GM12878 (cell line): ENCODE measurements at regions of chr4 and their contacts with region 1.

Region 1: DNA sequence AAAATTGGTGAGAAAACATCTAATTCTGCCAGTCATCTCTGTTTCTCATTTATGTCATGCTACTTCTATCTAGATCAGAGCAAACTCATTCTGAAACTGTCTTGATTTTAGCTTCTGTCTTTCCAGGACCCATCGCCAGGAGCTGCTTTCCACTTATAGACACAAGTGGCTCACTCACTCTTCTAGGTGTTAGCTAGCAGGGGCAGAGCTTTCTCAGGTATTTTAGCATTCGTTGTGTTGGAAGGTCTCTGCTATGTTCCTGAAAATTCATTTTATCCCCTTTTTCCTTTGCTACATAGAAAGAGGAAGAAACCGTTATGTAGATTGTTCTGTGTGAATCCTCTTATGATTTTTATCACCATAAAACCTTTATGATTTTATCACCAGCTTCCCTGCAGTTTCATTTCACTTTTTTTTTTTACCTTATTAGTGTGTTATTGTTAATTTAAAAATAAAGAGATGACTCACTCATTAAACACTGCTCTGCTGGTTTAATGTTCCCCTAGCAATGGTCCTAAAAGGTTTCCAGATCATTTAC is 246.6 kb upstream of the AADAT start:
- DNase-seq: peak; percentile 64
- ATAC-seq: peak; percentile 93
- H3K4me3 ChIP-seq: no peak overlapping the region
- H3K27ac ChIP-seq: peak overlapping the region; percentile 34; the same call in 1 of the 2 replicates
- H3K4me1 ChIP-seq: peaks cover 5% of the 10 kb centered on the region; the same call in 1 of the 2 replicates
- H3K27me3 ChIP-seq: no peaks in the 10 kb centered on the region
- CTCF ChIP-seq: peak in 1 of 3 experiments; percentile 10; a peak in 1 of 6 replicates
- EP300 ChIP-seq: peak; percentile 86 to 96
- POLR2A ChIP-seq: no peak
- RAD21 ChIP-seq: no peak

Region 2: GRCh38 chr4:170420254-170420693 is 84.0 kb after region 1 on chr4:
- CTCF ChIA-PET with region 1: no interaction called
- POLR2A ChIA-PET with region 1: no interaction called
- RAD21 ChIA-PET with region 1: interaction called, 5 read pairs
- SMC1A ChIA-PET with region 1: interaction called, 3 read pairs
- in situ Hi-C with region 1: no loop called
- intact Hi-C with region 1: loop called (anchors 1 kb)
- DNase-seq: peak; percentile 62
- ATAC-seq: peak; percentile 95
- H3K4me3 ChIP-seq: 0 out of 2 replicates have a peak overlapping the region, but pooled peaks have one; percentile 17
- H3K27ac ChIP-seq: no peak overlapping the region
- H3K4me1 ChIP-seq: no peaks in the 10 kb centered on the region
- H3K27me3 ChIP-seq: no peaks in the 10 kb centered on the region
- CTCF ChIP-seq: no peak
- EP300 ChIP-seq: peak; percentile 88 to 97
- POLR2A ChIP-seq: no peak
- RAD21 ChIP-seq: no peak

Region 3: GRCh38 chr4:170538821-170539473 is 202.6 kb after region 1 on chr4:
- CTCF ChIA-PET with region 1: no interaction called
- POLR2A ChIA-PET with region 1: no interaction called
- RAD21 ChIA-PET with region 1: no interaction called
- SMC1A ChIA-PET with region 1: no interaction called
- in situ Hi-C with region 1: no loop called
- intact Hi-C with region 1: no loop called
- DNase-seq: no peak
- ATAC-seq: no peak
- H3K4me3 ChIP-seq: no peak overlapping the region
- H3K27ac ChIP-seq: no peak overlapping the region
- H3K4me1 ChIP-seq: no peaks in the 10 kb centered on the region
- H3K27me3 ChIP-seq: no peaks in the 10 kb centered on the region
- CTCF ChIP-seq: no peak
- EP300 ChIP-seq: no peak
- POLR2A ChIP-seq: no peak
- RAD21 ChIP-seq: no peak

Region 4: DNA sequence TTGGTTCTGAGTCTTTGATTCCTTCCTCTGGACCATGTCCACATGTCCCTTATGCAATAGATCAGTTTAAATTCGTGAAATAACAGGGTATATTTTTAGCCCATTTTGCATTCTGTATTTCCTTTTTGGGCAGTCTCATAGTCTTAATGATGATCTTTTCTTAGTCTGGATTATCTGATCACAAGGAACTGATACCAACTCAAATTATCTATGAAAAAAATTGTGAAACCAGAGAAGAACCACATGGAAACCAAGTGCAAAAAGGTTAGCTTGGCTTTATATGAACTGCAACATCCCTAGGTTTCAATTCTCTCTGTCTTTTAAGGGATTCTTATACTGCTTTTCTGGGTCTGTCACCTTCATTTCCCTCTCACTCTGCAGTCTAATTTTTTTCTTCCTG is 362.0 kb after region 1 on chr4:
- CTCF ChIA-PET with region 1: no interaction called
- POLR2A ChIA-PET with region 1: no interaction called
- RAD21 ChIA-PET with region 1: no interaction called
- SMC1A ChIA-PET with region 1: no interaction called
- in situ Hi-C with region 1: loop called (anchors 10 kb)
- intact Hi-C with region 1: loop called (anchors 10 kb)
- DNase-seq: peak; percentile 69
- ATAC-seq: peak; percentile 86
- H3K4me3 ChIP-seq: peak overlapping the region; percentile 44; the same call in 1 of the 2 replicates
- H3K27ac ChIP-seq: peak overlapping the region; percentile 78
- H3K4me1 ChIP-seq: peaks cover 6% of the 10 kb centered on the region
- H3K27me3 ChIP-seq: no peaks in the 10 kb centered on the region
- CTCF ChIP-seq: no peak
- EP300 ChIP-seq: peak; percentile 62 to 80; a peak in 3 of 4 replicates
- POLR2A ChIP-seq: no peak
- RAD21 ChIP-seq: no peak

Region 5: DNA sequence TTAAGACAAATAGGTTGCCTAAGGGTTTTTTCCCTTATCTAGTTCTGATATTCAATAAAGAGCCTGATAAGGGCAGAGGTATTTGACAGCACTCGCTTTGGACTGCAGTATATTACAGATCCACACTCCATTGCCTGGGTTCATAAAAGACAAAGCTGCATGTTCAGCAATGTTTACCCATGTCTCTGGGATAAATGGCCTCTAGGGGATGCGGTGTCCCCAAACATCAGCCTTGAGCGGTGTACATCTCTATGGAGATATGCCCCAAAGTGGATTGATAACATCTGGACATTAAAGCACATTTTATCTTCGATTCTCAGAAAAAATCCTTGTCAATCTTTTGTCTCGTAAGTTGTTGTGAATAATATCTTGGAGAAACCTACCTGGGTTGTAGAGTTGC is 414.2 kb after region 1 on chr4:
- CTCF ChIA-PET with region 1: no interaction called
- POLR2A ChIA-PET with region 1: no interaction called
- RAD21 ChIA-PET with region 1: no interaction called
- SMC1A ChIA-PET with region 1: no interaction called
- in situ Hi-C with region 1: no loop called
- intact Hi-C with region 1: no loop called
- DNase-seq: no peak
- ATAC-seq: no peak
- H3K4me3 ChIP-seq: no peak overlapping the region
- H3K27ac ChIP-seq: no peak overlapping the region
- H3K4me1 ChIP-seq: no peaks in the 10 kb centered on the region
- H3K27me3 ChIP-seq: no peaks in the 10 kb centered on the region
- CTCF ChIP-seq: no peak
- EP300 ChIP-seq: no peak
- POLR2A ChIP-seq: no peak
- RAD21 ChIP-seq: no peak

Region 6: GRCh38 chr4:170853422-170854021 is 517.2 kb after region 1 on chr4:
- CTCF ChIA-PET with region 1: no interaction called
- POLR2A ChIA-PET with region 1: no interaction called
- RAD21 ChIA-PET with region 1: no interaction called
- SMC1A ChIA-PET with region 1: no interaction called
- in situ Hi-C with region 1: no loop called
- intact Hi-C with region 1: loop called (anchors 10 kb)
- DNase-seq: peak; percentile 9
- ATAC-seq: peak; percentile 82
- H3K4me3 ChIP-seq: no peak overlapping the region
- H3K27ac ChIP-seq: no peak overlapping the region
- H3K4me1 ChIP-seq: no peaks in the 10 kb centered on the region
- H3K27me3 ChIP-seq: no peaks in the 10 kb centered on the region
- CTCF ChIP-seq: peak; percentile 76 to 82 (median 82)
- EP300 ChIP-seq: no peak
- POLR2A ChIP-seq: no peak
- RAD21 ChIP-seq: peak; percentile 80